Aorta (tissue), 5 donors: ENCODE measurements at regions of chr16 and their contacts with region 1.

Region 1: DNA sequence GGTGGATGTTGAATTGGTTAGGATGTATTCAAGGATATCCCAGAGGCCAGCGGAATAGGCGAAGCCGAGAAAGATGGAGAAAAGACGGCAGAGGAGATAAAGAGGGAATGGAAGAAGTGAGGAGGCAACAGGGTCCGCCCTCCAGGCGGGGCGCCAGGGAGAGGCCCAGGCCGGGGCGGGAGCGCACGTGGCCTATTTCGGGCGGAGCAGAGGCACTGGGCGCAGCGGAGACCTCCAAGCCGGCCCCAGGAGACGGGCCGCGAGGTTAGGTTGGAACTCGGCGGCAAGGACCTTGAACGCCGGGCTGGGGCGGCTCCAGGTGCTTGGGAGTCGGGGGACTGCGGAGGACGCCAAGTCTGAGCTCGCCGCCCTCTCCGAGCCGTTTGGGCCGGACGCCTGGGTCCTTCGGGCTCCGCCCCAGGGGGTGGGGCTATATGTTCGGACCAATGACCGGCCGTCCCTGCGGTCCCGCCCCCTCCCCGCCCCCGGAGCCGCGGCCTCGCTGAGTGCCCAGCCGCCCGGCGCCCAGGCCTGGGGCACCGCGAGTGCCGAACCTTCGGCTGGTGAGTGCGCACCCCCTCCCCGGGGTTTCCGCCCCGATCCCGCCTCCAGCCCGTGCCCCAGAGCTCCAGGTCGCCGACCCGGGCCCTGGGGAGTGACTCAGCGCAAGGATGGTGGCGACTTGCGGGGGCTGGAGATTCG is at the start of gene ZNF771:
- DNase-seq: peak; percentile 96 to 97
- ATAC-seq: peak; percentile 96
- H3K4me3 ChIP-seq: peak within 1 kb of the TSS; percentile 60 to 66
- H3K27ac ChIP-seq: peak within 1 kb of the TSS; percentile 59 to 82
- H3K4me1 ChIP-seq: no peaks in the 10 kb centered on the region
- H3K27me3 ChIP-seq: no peaks in the 10 kb centered on the region
- total RNA-seq, gene ZNF771: 6.3 to 7.4 TPM

Region 2: GRCh38 chr16:30065143-30065850 is 342.0 kb before region 1 on chr16 and contains the start of gene ALDOA:
- intact Hi-C with region 1: loop called in 1 of 2 experiments (anchors 10 kb)
- DNase-seq: peak; percentile 99
- ATAC-seq: peak; percentile 94
- H3K4me3 ChIP-seq: peak within 1 kb of the TSS; percentile 57 to 90
- H3K27ac ChIP-seq: peak within 1 kb of the TSS; percentile 92 to 94
- H3K4me1 ChIP-seq: no peaks in the 10 kb centered on the region
- H3K27me3 ChIP-seq: no peaks in the 10 kb centered on the region
- total RNA-seq, gene ALDOA: 791 to 861 TPM

Region 3: GRCh38 chr16:30091474-30092372 is 315.5 kb before region 1 on chr16 and contains the start of gene TBX6:
- intact Hi-C with region 1: loop called in 1 of 2 experiments (anchors 10 kb)
- DNase-seq: peak; percentile 96 to 98
- ATAC-seq: peak; percentile 95
- H3K4me3 ChIP-seq: peak within 1 kb of the TSS; percentile 0 to 15
- H3K27ac ChIP-seq: peak within 1 kb of the TSS in 1 of 2 donors; percentile 29
- H3K4me1 ChIP-seq: no peaks in the 10 kb centered on the region
- H3K27me3 ChIP-seq: no peaks in the 10 kb centered on the region
- total RNA-seq, gene TBX6: 0.62 to 1.4 TPM

Region 4: GRCh38 chr16:30112197-30113030 is 294.8 kb before region 1 on chr16:
- intact Hi-C with region 1: loop called in 1 of 2 experiments (anchors 2 kb)
- DNase-seq: peak; percentile 72 to 91
- ATAC-seq: peak; percentile 40
- H3K4me3 ChIP-seq: no peak overlapping the region
- H3K27ac ChIP-seq: no peak overlapping the region
- H3K4me1 ChIP-seq: no peaks in the 10 kb centered on the region
- H3K27me3 ChIP-seq: no peaks in the 10 kb centered on the region

Region 5: DNA sequence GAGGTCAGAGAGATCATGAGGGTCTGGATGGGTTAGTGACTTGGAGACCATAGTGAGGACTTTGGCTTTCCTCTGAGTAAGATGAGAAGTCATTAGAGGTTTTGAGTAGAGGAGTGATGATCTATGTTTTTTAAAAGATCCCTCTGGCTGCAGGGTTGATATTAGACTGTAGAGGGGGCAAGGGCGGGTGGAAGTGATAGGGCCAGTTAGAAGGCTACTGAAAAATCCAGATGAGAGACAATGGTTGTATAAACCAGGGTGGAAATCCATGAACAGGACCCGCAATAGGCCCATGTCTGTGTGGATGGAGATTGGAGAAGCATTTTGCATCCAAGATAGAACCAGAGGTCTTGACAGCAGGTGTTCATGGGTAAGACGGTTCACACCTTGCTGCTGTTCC is 75.1 kb after region 1 on chr16:
- intact Hi-C with region 1: no loop called
- DNase-seq: no peak
- ATAC-seq: no peak
- H3K4me3 ChIP-seq: no peak overlapping the region
- H3K27ac ChIP-seq: no peak overlapping the region
- H3K4me1 ChIP-seq: no peaks in the 10 kb centered on the region
- H3K27me3 ChIP-seq: no peaks in the 10 kb centered on the region

Region 6: DNA sequence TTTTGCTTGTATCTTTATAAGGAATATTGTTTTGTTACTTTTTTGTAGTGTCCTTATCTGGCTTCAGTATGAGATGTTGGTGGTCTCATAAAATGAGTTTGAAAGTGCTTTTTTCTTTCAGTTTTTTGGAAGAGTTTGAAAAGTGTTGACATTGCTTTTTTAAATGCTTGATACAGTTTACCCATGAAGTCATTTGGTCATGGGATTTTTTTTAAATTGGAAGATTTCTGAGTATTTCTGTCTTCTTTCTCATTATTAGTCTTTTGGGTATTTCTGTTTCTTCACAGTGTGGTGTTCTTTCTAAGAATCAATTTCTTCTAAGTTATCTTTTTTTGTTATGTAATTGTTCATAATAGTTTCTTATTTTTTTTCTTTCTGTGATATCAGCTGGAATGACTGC is 1481.5 kb after region 1 on chr16:
- intact Hi-C with region 1: no loop called
- DNase-seq: no peak
- ATAC-seq: no peak
- H3K4me3 ChIP-seq: no peak overlapping the region
- H3K27ac ChIP-seq: no peak overlapping the region
- H3K4me1 ChIP-seq: peaks cover 0 to 4% of the 10 kb centered on the region in 2 donors
- H3K27me3 ChIP-seq: no peaks in the 10 kb centered on the region